Activated T-helper 1 cell treated with anti-CD3 and anti-CD28 coated beads, Interleukin-12 subunit alpha, Interleukin-12 subunit beta, Interleukin-2, Interleukin-4 antibody, amounts not matched to agents 30 ng/mL and 10 ng/mL and 1 ng/mL, durations not matched to agents 14 hours and 24 hours and 36 hours (primary cell): ENCODE measurements at regions of chr1 and their contacts with region 1.

Region 1: GRCh38 chr1:149899460-149900293 is at the start of gene BOLA1:
- DNase-seq: peak; percentile 77
- H3K4me3 Mint-ChIP-seq: peak within 1 kb of the TSS; percentile 86
- H3K27ac Mint-ChIP-seq: peak within 1 kb of the TSS; percentile 92
- H3K4me1 Mint-ChIP-seq: peaks cover 27% of the 10 kb centered on the region
- H3K27me3 Mint-ChIP-seq: peaks cover 2% of the 10 kb centered on the region
- total RNA-seq, gene BOLA1: 23.9 and 24.3 TPM in 2 replicates

Region 2: DNA sequence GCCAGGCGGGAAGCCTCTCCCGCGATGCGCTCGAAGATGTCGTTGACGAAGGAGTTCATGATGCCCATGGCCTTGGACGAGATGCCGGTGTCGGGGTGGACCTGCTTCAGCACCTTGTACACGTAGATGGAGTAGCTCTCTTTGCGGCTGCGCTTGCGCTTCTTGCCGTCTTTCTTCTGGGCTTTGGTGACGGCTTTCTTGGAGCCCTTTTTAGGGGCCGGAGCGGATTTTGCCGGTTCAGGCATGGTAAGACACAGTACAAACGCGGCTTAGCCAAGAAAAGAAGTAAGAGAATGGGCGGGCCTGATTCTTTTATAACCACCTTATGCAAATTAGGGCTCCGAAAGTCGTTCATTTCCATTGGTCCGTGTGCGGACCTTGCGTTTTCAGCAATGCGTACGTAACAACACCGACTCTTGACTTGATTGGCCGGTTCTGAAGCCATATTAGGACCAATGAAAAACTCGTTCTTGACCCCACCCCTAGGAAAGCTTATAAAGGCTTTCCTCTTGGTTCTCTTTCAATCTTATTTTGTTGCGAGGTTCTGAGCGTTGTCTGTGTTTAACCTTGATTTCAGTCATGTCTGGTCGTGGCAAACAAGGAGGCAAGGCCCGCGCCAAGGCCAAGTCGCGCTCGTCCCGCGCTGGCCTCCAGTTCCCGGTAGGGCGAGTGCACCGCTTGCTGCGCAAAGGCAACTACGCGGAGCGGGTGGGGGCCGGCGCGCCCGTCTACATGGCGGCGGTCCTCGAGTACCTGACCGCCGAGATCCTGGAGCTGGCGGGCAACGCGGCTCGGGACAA is 13.1 kb before region 1 on chr1:
- intact Hi-C with region 1: loop called (anchors 1 kb)
- DNase-seq: peak; percentile 90
- H3K4me3 Mint-ChIP-seq: no peak overlapping the region
- H3K27ac Mint-ChIP-seq: no peak overlapping the region
- H3K4me1 Mint-ChIP-seq: peaks cover 13% of the 10 kb centered on the region
- H3K27me3 Mint-ChIP-seq: no peaks in the 10 kb centered on the region

Region 3: GRCh38 chr1:149917571-149918144 is 18.0 kb after region 1 on chr1 and contains the start of gene SV2A:
- intact Hi-C with region 1: loop called (anchors 2 kb)
- DNase-seq: no peak
- H3K4me3 Mint-ChIP-seq: peak within 1 kb of the TSS; percentile 96
- H3K27ac Mint-ChIP-seq: peak within 1 kb of the TSS; percentile 87
- H3K4me1 Mint-ChIP-seq: peaks cover 42% of the 10 kb centered on the region
- H3K27me3 Mint-ChIP-seq: no peaks in the 10 kb centered on the region
- total RNA-seq, gene SV2A: 17.3 and 18.6 TPM in 2 replicates

Region 4: GRCh38 chr1:150162862-150163706 is 263.4 kb after region 1 on chr1:
- intact Hi-C with region 1: loop called (anchors 10 kb)
- DNase-seq: no peak
- H3K4me3 Mint-ChIP-seq: no peak overlapping the region
- H3K27ac Mint-ChIP-seq: no peak overlapping the region
- H3K4me1 Mint-ChIP-seq: peaks cover 43% of the 10 kb centered on the region
- H3K27me3 Mint-ChIP-seq: peaks cover 5% of the 10 kb centered on the region

Region 5: GRCh38 chr1:150213170-150214098 is 313.8 kb after region 1 on chr1:
- intact Hi-C with region 1: loop called (anchors 10 kb)
- DNase-seq: peak; percentile 87
- H3K4me3 Mint-ChIP-seq: peak overlapping the region; percentile 90
- H3K27ac Mint-ChIP-seq: peak overlapping the region; percentile 94
- H3K4me1 Mint-ChIP-seq: peaks cover 19% of the 10 kb centered on the region
- H3K27me3 Mint-ChIP-seq: peaks cover 2% of the 10 kb centered on the region

Region 6: GRCh38 chr1:151222130-151222529 is 1322.5 kb after region 1 on chr1:
- intact Hi-C with region 1: no loop called
- DNase-seq: no peak
- H3K4me3 Mint-ChIP-seq: no peak overlapping the region
- H3K27ac Mint-ChIP-seq: no peak overlapping the region
- H3K4me1 Mint-ChIP-seq: peaks cover 14% of the 10 kb centered on the region
- H3K27me3 Mint-ChIP-seq: no peaks in the 10 kb centered on the region